ENCODE measurements at regions of chr10 and their contacts with region 1.

Region 1: GRCh38 chr10:6542999-6543430 is 37.1 kb downstream of the PRKCQ start:
- DNase-seq: peak; percentile 71
- ATAC-seq: peak; percentile 69
- H3K4me3 Mint-ChIP-seq: peak overlapping the region; percentile 79
- H3K27ac Mint-ChIP-seq: peak overlapping the region; percentile 99
- H3K4me1 Mint-ChIP-seq: peaks cover 68% of the 10 kb centered on the region
- H3K27me3 Mint-ChIP-seq: no peaks in the 10 kb centered on the region

Region 2: GRCh38 chr10:6482737-6483357 is 60.2 kb before region 1 on chr10:
- CTCF ChIA-PET with region 1: interaction called, 10 read pairs
- DNase-seq: no peak
- ATAC-seq: peak; percentile 83
- H3K4me3 Mint-ChIP-seq: peak overlapping the region; percentile 51
- H3K27ac Mint-ChIP-seq: peak overlapping the region; percentile 77
- H3K4me1 Mint-ChIP-seq: peaks cover 63% of the 10 kb centered on the region
- H3K27me3 Mint-ChIP-seq: no peaks in the 10 kb centered on the region

Region 3: GRCh38 chr10:6493521-6494441 is 49.2 kb before region 1 on chr10:
- CTCF ChIA-PET with region 1: interaction called, 12 read pairs
- DNase-seq: no peak
- ATAC-seq: peak; percentile 16
- H3K4me3 Mint-ChIP-seq: no peak overlapping the region
- H3K27ac Mint-ChIP-seq: no peak overlapping the region
- H3K4me1 Mint-ChIP-seq: peaks cover 27% of the 10 kb centered on the region
- H3K27me3 Mint-ChIP-seq: no peaks in the 10 kb centered on the region

Region 4: DNA sequence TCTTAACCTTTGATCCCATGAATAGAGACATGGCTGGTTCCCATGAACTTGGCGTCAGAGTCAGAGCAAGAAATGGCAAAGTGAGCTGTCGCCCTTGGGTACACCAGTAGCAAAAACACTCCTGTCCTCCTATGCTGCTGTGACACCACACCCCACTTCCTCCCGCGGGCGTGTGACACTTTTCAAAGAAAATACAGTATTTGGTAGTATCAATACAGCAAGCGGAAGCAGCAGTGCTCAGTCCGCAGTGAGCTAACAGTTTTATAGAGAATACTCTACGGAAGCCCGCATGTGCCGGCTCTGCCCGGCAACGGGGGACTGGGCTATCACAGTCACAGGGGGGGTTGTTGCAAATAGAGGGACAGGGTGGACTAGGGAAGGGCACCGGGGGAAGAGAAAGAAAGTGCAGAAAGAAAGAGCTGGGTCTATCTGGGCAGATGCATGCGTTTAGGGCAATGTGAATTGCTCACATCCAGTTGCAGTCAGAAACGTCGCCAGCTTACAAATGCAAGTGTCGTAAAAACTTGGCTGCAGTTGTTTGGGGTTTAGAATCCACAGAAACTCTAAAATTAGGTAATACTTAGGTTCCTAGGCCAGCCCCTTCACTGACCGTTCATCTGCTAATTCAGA is 12.7 kb before region 1 on chr10:
- CTCF ChIA-PET with region 1: interaction called, 36 read pairs
- DNase-seq: peak; percentile 95
- ATAC-seq: peak; percentile 96
- H3K4me3 Mint-ChIP-seq: peak overlapping the region; percentile 77
- H3K27ac Mint-ChIP-seq: peak overlapping the region; percentile 100
- H3K4me1 Mint-ChIP-seq: peaks cover 55% of the 10 kb centered on the region
- H3K27me3 Mint-ChIP-seq: no peaks in the 10 kb centered on the region